IMR-90 (cell line): ENCODE measurements at regions of chr6 and their contacts with region 1.

Region 1: GRCh38 chr6:87088076-87088475 is 6.8 kb downstream of the CGA start:
- DNase-seq: no peak
- ATAC-seq: no peak
- H3K4me3 ChIP-seq: no peak overlapping the region
- H3K27ac ChIP-seq: no peak overlapping the region
- H3K4me1 ChIP-seq: no peaks in the 10 kb centered on the region
- H3K27me3 ChIP-seq: peaks cover 2% of the 10 kb centered on the region; the same call in 1 of the 2 replicates
- CTCF ChIP-seq: no peak
- POLR2A ChIP-seq: no peak
- RAD21 ChIP-seq: no peak

Region 2: DNA sequence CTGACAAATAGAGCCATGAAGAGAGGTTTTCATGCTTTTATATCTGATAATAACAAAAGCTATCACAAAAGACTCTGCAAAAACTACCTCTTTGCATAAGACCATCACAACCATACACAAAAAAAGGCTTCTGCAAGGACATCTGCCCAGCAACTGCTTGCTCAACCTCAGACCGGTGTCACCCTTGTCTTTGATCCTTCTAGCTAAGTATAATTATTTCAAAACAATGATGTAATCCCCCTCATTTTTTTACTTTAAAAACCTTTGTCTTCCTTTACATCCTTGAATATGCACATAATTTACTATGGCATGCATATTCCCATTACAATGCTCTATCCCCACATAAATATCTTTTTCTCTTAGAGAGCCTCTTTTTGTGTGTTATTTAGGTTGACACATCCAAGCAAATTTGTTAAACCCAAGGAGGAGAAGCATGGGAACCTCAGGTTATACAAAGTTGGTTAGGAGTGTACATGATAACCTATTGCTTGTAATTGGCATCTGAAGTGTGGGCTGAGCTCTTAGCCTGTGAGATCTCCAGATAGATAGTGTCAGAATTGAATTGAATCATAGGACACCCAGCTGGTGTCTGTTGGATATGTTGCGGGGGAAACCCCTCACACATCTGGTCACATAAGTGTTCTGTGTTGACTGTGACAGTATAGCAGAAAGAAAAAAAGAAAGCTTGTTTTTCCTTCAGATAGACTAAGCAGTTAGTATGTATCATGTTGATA is 27.5 kb after region 1 on chr6:
- CTCF ChIA-PET with region 1: interaction called, 13 read pairs
- POLR2A ChIA-PET with region 1: interaction called, 3 read pairs
- dilution Hi-C with region 1: no loop called
- in situ Hi-C with region 1: no loop called
- intact Hi-C with region 1: no loop called
- DNase-seq: no peak
- ATAC-seq: no peak
- H3K4me3 ChIP-seq: no peak overlapping the region
- H3K27ac ChIP-seq: no peak overlapping the region
- H3K4me1 ChIP-seq: no peaks in the 10 kb centered on the region
- H3K27me3 ChIP-seq: peaks cover 2% of the 10 kb centered on the region; the same call in 1 of the 2 replicates
- CTCF ChIP-seq: no peak
- POLR2A ChIP-seq: no peak
- RAD21 ChIP-seq: no peak